ENCODE measurements at regions of chr16 and their contacts with region 1.

Region 1: GRCh38 chr16:2752035-2752849 is at the start of gene SRRM2:
- DNase-seq: peak; percentile 97 to 98
- ATAC-seq: peak; percentile 96
- H3K4me3 ChIP-seq: peak within 1 kb of the TSS; percentile 53 to 94
- H3K27ac ChIP-seq: peak within 1 kb of the TSS; percentile 23 to 97
- H3K4me1 ChIP-seq: peaks cover 0 to 2% of the 10 kb centered on the region in 2 donors
- H3K27me3 ChIP-seq: no peaks in the 10 kb centered on the region
- total RNA-seq, gene SRRM2: 552 to 716 TPM

Region 2: GRCh38 chr16:2777231-2777902 is 25.1 kb after region 1 on chr16 and contains the start of gene ELOB:
- intact Hi-C with region 1: loop called in 1 of 2 experiments (anchors 1 kb)
- DNase-seq: peak; percentile 92 to 97
- ATAC-seq: peak; percentile 94
- H3K4me3 ChIP-seq: peak within 1 kb of the TSS; percentile 67 to 87
- H3K27ac ChIP-seq: peak within 1 kb of the TSS; percentile 79 to 88
- H3K4me1 ChIP-seq: no peaks in the 10 kb centered on the region
- H3K27me3 ChIP-seq: no peaks in the 10 kb centered on the region
- total RNA-seq, gene ELOB: 146 to 174 TPM

Measured in aorta (tissue), 5 donors.